ENCODE measurements at regions of chr12 and their contacts with region 1.

Region 1: GRCh38 chr12:121536899-121537813 is 43.7 kb downstream of the KDM2B start:
- DNase-seq: peak; percentile 57
- ATAC-seq: peak; percentile 26
- H3K4me3 Mint-ChIP-seq: peak overlapping the region; percentile 65
- H3K27ac Mint-ChIP-seq: no peak overlapping the region
- H3K4me1 Mint-ChIP-seq: peaks cover 59% of the 10 kb centered on the region
- H3K27me3 Mint-ChIP-seq: peaks cover 9% of the 10 kb centered on the region
- CTCF ChIP-seq: no peak

Region 2: DNA sequence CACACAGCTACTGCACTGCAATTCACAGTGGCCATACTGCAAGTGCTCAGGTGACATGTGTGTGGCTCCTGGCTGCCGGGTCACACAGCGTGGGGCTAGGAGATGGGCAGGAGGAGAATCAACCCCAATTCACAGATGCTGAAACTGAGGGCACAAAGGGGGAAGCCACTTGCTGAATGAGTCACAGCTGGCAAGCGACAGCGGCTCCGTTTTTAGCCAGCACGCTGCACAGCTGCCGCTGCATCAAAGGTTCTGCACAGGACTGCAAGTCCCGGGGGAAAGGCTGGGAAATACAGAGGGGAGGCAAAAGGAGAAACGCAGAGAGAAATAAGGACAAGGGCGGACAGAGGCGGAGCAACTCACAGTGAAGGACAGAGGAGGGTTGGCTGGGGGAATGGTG is 14.2 kb before region 1 on chr12:
- CTCF ChIA-PET with region 1: no interaction called
- POLR2A ChIA-PET with region 1: no interaction called
- DNase-seq: no peak
- ATAC-seq: no peak
- H3K4me3 Mint-ChIP-seq: no peak overlapping the region
- H3K27ac Mint-ChIP-seq: no peak overlapping the region
- H3K4me1 Mint-ChIP-seq: peaks cover 14% of the 10 kb centered on the region
- H3K27me3 Mint-ChIP-seq: no peaks in the 10 kb centered on the region
- CTCF ChIP-seq: no peak

Region 3: GRCh38 chr12:121829250-121829918 is 292.2 kb after region 1 on chr12:
- CTCF ChIA-PET with region 1: no interaction called
- POLR2A ChIA-PET with region 1: interaction called, 10 read pairs
- DNase-seq: no peak
- ATAC-seq: no peak
- H3K4me3 Mint-ChIP-seq: no peak overlapping the region
- H3K27ac Mint-ChIP-seq: no peak overlapping the region
- H3K4me1 Mint-ChIP-seq: no peaks in the 10 kb centered on the region
- H3K27me3 Mint-ChIP-seq: no peaks in the 10 kb centered on the region
- CTCF ChIP-seq: no peak

Measured in WTC11 (cell line).